Vagina (tissue), 2 donors: ENCODE measurements at regions of chr5 and their contacts with region 1.

Region 1: GRCh38 chr5:138542956-138543729 is at the start of gene ETF1:
- DNase-seq: peak; percentile 99 to 100
- H3K4me3 ChIP-seq: peak within 1 kb of the TSS; percentile 80 to 91
- H3K27ac ChIP-seq: peak within 1 kb of the TSS; percentile 94
- H3K4me1 ChIP-seq: peaks cover 72% of the 10 kb centered on the region
- H3K27me3 ChIP-seq: no peaks in the 10 kb centered on the region
- CTCF ChIP-seq: no peak
- POLR2A ChIP-seq: peak; percentile 40 to 99
- total RNA-seq, gene ETF1: 60.6 TPM

Region 2: DNA sequence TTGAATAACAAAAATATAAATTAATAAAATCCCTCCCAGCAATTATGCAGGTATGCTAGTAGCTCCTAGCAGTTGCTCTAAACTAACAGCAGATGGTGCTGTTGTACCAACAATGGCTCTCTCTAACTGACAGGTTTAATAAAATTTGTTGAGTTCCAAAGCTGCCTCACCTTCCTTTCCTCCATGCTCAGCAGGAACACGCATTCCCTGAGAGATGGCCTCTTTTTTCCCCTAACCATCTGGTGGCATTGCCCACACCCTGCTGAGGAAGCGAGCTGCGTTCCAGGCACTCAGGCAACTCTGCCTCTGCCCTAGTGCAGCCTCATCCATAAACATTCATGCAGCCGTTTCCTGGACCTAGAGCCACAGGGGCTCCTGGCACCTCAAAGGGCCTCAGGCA is 913.5 kb before region 1 on chr5:
- intact Hi-C with region 1: no loop called
- DNase-seq: no peak
- H3K4me3 ChIP-seq: no peak overlapping the region
- H3K27ac ChIP-seq: peak overlapping the region; percentile 15
- H3K4me1 ChIP-seq: peaks cover 17% of the 10 kb centered on the region
- H3K27me3 ChIP-seq: no peaks in the 10 kb centered on the region
- CTCF ChIP-seq: peak; percentile 89 to 98 (median 92)
- POLR2A ChIP-seq: no peak

Region 3: DNA sequence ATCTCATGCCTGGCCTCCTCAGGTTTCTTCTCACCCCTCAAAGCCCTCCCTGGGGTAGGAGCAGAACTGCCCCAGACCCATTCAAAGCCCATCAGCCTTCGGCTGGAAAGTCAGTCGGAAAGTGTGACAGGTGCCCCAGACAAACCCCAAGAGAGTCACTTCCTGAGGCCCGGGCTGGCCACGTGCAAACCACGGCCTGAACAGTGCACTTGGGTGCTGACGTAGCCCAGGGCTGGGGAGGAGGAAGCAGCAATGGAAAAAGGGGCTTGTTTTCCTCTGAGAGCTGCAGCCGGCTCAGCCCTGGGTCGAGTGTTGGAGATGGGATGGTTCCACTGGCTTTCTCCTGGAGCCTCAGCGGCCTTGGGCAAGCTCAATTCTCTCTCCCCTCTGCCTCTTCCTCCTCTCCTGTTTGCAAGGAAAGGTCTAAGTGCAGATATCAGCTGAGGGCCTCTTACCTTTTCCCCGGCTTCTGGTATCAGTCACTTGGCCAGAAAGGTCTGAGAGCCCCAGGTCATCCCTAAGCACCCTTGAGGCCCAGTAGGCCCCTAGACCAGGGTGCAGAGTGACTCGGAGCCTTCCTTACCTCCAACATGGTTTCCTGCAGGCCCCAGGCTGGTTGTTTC is 83.7 kb before region 1 on chr5:
- intact Hi-C with region 1: loop called (anchors 5 kb)
- DNase-seq: no peak
- H3K4me3 ChIP-seq: no peak overlapping the region
- H3K27ac ChIP-seq: no peak overlapping the region
- H3K4me1 ChIP-seq: peaks cover 6% of the 10 kb centered on the region
- H3K27me3 ChIP-seq: no peaks in the 10 kb centered on the region
- CTCF ChIP-seq: no peak
- POLR2A ChIP-seq: no peak

Region 4: GRCh38 chr5:138575194-138576015 is 32.3 kb after region 1 on chr5 and contains the start of gene HSPA9:
- intact Hi-C with region 1: loop called (anchors 1 kb)
- DNase-seq: peak; percentile 99
- H3K4me3 ChIP-seq: peak within 1 kb of the TSS; percentile 78 to 100
- H3K27ac ChIP-seq: peak within 1 kb of the TSS; percentile 99
- H3K4me1 ChIP-seq: peaks cover 42% of the 10 kb centered on the region
- H3K27me3 ChIP-seq: no peaks in the 10 kb centered on the region
- CTCF ChIP-seq: peak in 2 of 3 experiments; percentile 10 to 16
- POLR2A ChIP-seq: peak in 1 of 2 donors; percentile 91
- total RNA-seq, gene HSPA9: 156 TPM